GM12878 (cell line): ENCODE measurements at regions of chr10 and their contacts with region 1.

Region 1: GRCh38 chr10:68067029-68067428 is 8.1 kb downstream of the HERC4 start:
- DNase-seq: no peak
- ATAC-seq: no peak
- H3K4me3 ChIP-seq: no peak overlapping the region
- H3K27ac ChIP-seq: no peak overlapping the region
- H3K4me1 ChIP-seq: no peaks in the 10 kb centered on the region
- H3K27me3 ChIP-seq: no peaks in the 10 kb centered on the region
- CTCF ChIP-seq: no peak
- EP300 ChIP-seq: no peak
- POLR2A ChIP-seq: no peak
- RAD21 ChIP-seq: no peak

Region 2: DNA sequence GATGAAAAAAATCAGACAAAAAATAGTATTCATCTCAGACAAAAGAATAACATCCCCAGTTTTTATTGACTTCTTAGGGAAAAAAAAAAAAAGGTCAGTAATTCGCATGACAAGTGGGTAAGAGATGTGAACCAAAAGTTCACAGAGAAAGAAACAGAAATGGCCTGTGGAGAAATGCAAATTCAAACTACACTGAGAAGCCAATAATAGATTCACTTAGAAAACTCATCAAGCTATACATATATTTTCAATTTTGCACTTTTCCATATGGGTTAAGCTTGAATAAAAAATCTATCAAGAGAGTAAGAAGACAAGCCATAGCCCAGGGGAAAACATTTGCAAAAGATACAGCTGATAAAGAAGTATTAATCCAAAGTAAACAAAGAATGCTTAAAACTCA is 19.9 kb before region 1 on chr10:
- CTCF ChIA-PET with region 1: interaction called, 3 read pairs
- POLR2A ChIA-PET with region 1: interaction called, 4 read pairs
- RAD21 ChIA-PET with region 1: no interaction called
- SMC1A ChIA-PET with region 1: interaction called, 13 read pairs
- in situ Hi-C with region 1: no loop called
- intact Hi-C with region 1: no loop called
- DNase-seq: no peak
- ATAC-seq: peak; percentile 41; the same call in 1 of the 3 replicates
- H3K4me3 ChIP-seq: peak overlapping the region; percentile 6; the same call in 1 of the 2 replicates
- H3K27ac ChIP-seq: peak overlapping the region; percentile 4
- H3K4me1 ChIP-seq: peaks cover 13% of the 10 kb centered on the region; the same call in 1 of the 2 replicates
- H3K27me3 ChIP-seq: no peaks in the 10 kb centered on the region
- CTCF ChIP-seq: no peak
- EP300 ChIP-seq: no peak
- POLR2A ChIP-seq: no peak
- RAD21 ChIP-seq: no peak

Region 3: GRCh38 chr10:68560186-68560942 is 493.3 kb after region 1 on chr10 and contains the start of gene TET1:
- CTCF ChIA-PET with region 1: no interaction called
- POLR2A ChIA-PET with region 1: no interaction called
- RAD21 ChIA-PET with region 1: no interaction called
- SMC1A ChIA-PET with region 1: no interaction called
- in situ Hi-C with region 1: no loop called
- intact Hi-C with region 1: no loop called
- DNase-seq: no peak
- ATAC-seq: peak; percentile 68
- H3K4me3 ChIP-seq: peak within 1 kb of the TSS; percentile 41; the same call in 1 of the 2 replicates
- H3K27ac ChIP-seq: no peak within 1 kb of the TSS
- H3K4me1 ChIP-seq: no peaks in the 10 kb centered on the region
- H3K27me3 ChIP-seq: peaks cover 6 to 10% of the 10 kb centered on the region in 2 experiments
- CTCF ChIP-seq: no peak
- EP300 ChIP-seq: no peak
- POLR2A ChIP-seq: no peak
- RAD21 ChIP-seq: no peak
- polyA plus RNA-seq, gene TET1: 0.22 to 0.31 TPM